Thyroid gland (tissue), 4 donors: ENCODE measurements at regions of chr3 and their contacts with region 1.

Region 1: DNA sequence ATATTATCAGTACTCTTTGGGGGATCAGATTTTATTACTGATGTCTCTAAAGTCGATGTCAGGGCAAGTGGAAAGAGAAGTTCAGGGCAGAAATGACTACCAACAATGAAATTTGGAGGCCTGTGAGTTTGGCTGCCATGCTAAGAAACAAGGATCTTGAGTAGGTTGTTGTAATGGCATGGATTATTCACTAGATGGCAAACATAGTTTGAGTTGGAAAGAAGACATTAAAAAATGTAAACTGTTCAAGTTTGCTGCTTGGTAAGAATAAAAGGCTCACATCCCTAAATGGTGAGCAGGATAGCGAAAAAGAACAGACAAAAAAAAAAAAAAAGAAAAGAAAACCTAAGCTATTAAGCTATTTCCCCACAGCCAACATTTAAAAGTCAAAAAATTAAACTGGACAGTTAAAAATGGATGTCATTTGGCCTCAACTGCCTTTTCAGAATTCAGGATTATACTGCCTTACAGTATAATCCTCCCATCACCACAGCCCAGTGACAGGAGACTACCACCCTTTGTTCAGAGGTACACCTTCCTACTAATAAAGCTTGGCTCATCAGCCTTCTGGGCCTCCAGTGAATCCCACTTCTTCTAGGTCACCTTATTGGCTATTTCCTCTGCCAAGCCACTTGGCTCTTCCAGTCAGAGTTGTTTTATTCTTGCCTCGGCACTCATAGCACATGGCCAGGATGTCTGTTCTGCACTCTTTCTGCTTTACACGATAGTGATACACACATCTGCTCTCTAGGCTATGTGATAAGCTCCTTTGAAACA is 163.7 kb downstream of the PLD1 start:
- DNase-seq: no peak
- H3K4me3 ChIP-seq: no peak overlapping the region
- H3K27ac ChIP-seq: peak overlapping the region in 1 of 3 donors; percentile 40
- H3K4me1 ChIP-seq: peaks cover 0 to 7% of the 10 kb centered on the region in 2 donors
- H3K27me3 ChIP-seq: no peaks in the 10 kb centered on the region
- CTCF ChIP-seq: peak in 4 of 6 experiments; percentile 34 to 68 (median 64)
- POLR2A ChIP-seq: no peak

Region 2: DNA sequence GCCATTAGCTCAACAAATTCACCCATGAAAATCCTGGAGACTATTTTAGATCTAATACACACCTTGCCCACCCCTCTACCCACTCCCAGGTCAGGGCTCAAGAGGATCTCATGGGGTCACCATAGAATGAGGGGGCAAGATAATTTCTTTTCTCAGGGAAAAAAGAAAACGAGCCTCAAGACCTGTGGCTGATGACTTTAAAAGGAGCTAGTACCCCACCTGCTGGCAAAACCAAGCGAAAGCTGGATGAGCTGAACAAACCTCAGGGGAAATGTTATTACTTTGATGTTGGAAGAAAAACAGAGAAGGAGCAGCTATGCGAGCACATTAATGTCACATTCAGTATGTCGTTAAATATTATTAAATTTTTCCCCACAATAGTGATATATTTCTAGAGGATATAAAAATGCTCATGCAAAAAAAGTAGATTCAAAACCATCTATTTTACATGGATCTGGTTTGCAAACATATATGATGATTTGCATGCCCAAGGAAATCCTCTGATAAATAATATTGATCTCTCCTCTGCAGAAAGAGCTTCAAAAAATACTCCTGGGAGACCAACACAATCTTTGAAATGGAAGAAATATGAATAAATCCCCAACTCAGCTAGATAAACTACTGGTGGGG is 126.0 kb after region 1 on chr3:
- intact Hi-C with region 1: loop called (anchors 10 kb)
- DNase-seq: peak; percentile 60 to 62
- H3K4me3 ChIP-seq: no peak overlapping the region
- H3K27ac ChIP-seq: no peak overlapping the region
- H3K4me1 ChIP-seq: peaks cover 7 to 13% of the 10 kb centered on the region in 2 donors
- H3K27me3 ChIP-seq: no peaks in the 10 kb centered on the region
- CTCF ChIP-seq: peak in 5 of 6 experiments; percentile 44 to 68 (median 63)
- POLR2A ChIP-seq: no peak

Region 3: GRCh38 chr3:172341482-172342059 is 695.0 kb after region 1 on chr3:
- intact Hi-C with region 1: loop called (anchors 10 kb)
- DNase-seq: no peak
- H3K4me3 ChIP-seq: no peak overlapping the region
- H3K27ac ChIP-seq: no peak overlapping the region
- H3K4me1 ChIP-seq: peaks cover 6 to 11% of the 10 kb centered on the region in 2 donors
- H3K27me3 ChIP-seq: no peaks in the 10 kb centered on the region
- CTCF ChIP-seq: peak; percentile 32 to 68 (median 65)
- POLR2A ChIP-seq: no peak